Natural killer cell (primary cell): ENCODE measurements at regions of chr19 and their contacts with region 1.

Region 1: GRCh38 chr19:21082011-21082975 is at the start of gene ZNF714:
- DNase-seq: peak; percentile 83 to 87
- ATAC-seq: peak; percentile 96 to 100 (median 99)
- H3K4me3 ChIP-seq: peak within 1 kb of the TSS; percentile 87
- H3K4me3 Mint-ChIP-seq: peak within 1 kb of the TSS; percentile 99
- H3K27ac ChIP-seq: peak within 1 kb of the TSS; percentile 78
- H3K27ac Mint-ChIP-seq: peak within 1 kb of the TSS; percentile 91 to 99
- H3K4me1 ChIP-seq: peaks cover 2% of the 10 kb centered on the region
- H3K4me1 Mint-ChIP-seq: peaks cover 10 to 14% of the 10 kb centered on the region in 2 donors
- H3K27me3 ChIP-seq: no peaks in the 10 kb centered on the region
- H3K27me3 Mint-ChIP-seq: no peaks in the 10 kb centered on the region
- CTCF ChIP-seq: no peak
- total RNA-seq, gene ZNF714: 12.5 to 15.0 (median 14.7) TPM

Region 2: DNA sequence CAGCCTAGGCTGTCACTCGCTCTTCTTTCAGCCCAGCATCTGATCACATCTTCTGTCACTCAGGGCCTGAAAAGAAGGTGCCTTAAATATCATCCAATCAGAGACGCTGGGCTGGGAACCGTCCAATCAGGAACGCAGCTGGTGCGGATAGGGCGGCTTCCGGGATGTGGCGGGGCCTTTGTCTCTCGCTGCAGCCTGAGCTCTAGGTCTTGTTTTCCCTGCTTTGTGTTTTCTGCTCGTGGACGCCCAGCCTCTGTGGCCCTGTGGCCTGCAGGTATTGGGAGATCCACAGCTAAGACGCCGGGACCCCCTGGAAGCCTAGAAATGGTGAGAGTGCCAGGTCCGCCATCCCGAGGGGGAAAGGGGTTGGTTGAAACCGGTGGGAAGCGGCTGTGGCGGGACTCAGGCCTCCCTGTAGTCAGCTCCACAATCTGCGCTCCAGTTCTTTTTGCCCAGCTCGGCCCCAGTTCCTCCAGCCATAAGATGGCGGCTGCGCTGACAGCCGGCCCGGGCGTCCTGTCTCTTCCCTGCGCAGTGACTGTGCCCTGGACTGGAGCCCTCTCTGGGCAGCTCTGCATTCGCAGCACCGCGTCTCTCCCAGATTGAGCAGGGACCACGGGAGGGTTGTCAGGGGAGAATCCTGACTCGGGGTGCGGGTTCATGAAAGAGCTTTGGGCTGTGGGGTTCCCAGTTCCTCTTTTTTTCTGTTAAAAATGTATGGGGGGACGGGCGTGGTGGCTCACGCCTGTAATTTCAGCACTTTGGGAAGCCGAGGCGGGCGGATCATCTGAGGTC is 159.0 kb before region 1 on chr19 and contains the start of gene ZNF85:
- intact Hi-C with region 1: loop called (anchors 1 kb)
- DNase-seq: peak; percentile 89 to 94
- ATAC-seq: peak; percentile 96 to 99 (median 99)
- H3K4me3 ChIP-seq: peak within 1 kb of the TSS; percentile 73
- H3K4me3 Mint-ChIP-seq: peak within 1 kb of the TSS; percentile 97
- H3K27ac ChIP-seq: peak within 1 kb of the TSS; percentile 91
- H3K27ac Mint-ChIP-seq: peak within 1 kb of the TSS; percentile 91 to 98
- H3K4me1 ChIP-seq: peaks cover 11% of the 10 kb centered on the region
- H3K4me1 Mint-ChIP-seq: peaks cover 19% of the 10 kb centered on the region in 2 donors
- H3K27me3 ChIP-seq: no peaks in the 10 kb centered on the region
- H3K27me3 Mint-ChIP-seq: no peaks in the 10 kb centered on the region
- CTCF ChIP-seq: no peak
- total RNA-seq, gene ZNF85: 3.9 to 8.6 (median 5.4) TPM

Region 3: GRCh38 chr19:21020298-21021227 is 61.7 kb before region 1 on chr19 and contains the start of gene ZNF430:
- intact Hi-C with region 1: loop called (anchors 2 kb)
- DNase-seq: peak; percentile 92 to 96
- ATAC-seq: peak; percentile 94 to 99 (median 97)
- H3K4me3 ChIP-seq: peak within 1 kb of the TSS; percentile 98
- H3K4me3 Mint-ChIP-seq: peak within 1 kb of the TSS; percentile 100
- H3K27ac ChIP-seq: peak within 1 kb of the TSS; percentile 97
- H3K27ac Mint-ChIP-seq: peak within 1 kb of the TSS; percentile 99 to 100
- H3K4me1 ChIP-seq: peaks cover 19% of the 10 kb centered on the region
- H3K4me1 Mint-ChIP-seq: peaks cover 37 to 39% of the 10 kb centered on the region in 2 donors
- H3K27me3 ChIP-seq: no peaks in the 10 kb centered on the region
- H3K27me3 Mint-ChIP-seq: no peaks in the 10 kb centered on the region
- CTCF ChIP-seq: no peak
- total RNA-seq, gene ZNF430: 32.7 to 43.0 (median 33.3) TPM

Region 4: DNA sequence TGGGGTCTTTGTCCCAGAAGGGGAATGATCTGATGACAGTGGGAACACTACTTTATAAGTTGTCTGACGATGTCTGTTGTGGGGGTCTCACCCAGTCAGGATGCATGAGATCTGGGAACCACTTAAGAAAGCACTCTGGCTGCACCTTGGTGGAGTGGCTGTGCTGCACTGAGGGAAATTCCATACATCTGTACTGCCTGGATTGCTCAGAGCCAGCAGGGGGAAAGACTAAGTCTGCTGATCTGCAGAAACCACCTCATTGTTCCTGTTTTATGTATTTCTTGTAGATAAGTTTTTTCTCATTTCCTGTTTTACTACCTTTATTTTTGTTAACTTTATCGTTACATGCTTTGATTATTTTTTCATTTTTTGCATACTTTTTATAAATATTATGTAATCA is 34.6 kb before region 1 on chr19:
- intact Hi-C with region 1: no loop called
- DNase-seq: no peak
- ATAC-seq: no peak
- H3K4me3 ChIP-seq: no peak overlapping the region
- H3K4me3 Mint-ChIP-seq: no peak overlapping the region
- H3K27ac ChIP-seq: no peak overlapping the region
- H3K27ac Mint-ChIP-seq: peak overlapping the region; percentile 0 to 3
- H3K4me1 ChIP-seq: no peaks in the 10 kb centered on the region
- H3K4me1 Mint-ChIP-seq: peaks cover 37 to 46% of the 10 kb centered on the region in 2 donors
- H3K27me3 ChIP-seq: no peaks in the 10 kb centered on the region
- H3K27me3 Mint-ChIP-seq: no peaks in the 10 kb centered on the region
- CTCF ChIP-seq: no peak

Region 5: DNA sequence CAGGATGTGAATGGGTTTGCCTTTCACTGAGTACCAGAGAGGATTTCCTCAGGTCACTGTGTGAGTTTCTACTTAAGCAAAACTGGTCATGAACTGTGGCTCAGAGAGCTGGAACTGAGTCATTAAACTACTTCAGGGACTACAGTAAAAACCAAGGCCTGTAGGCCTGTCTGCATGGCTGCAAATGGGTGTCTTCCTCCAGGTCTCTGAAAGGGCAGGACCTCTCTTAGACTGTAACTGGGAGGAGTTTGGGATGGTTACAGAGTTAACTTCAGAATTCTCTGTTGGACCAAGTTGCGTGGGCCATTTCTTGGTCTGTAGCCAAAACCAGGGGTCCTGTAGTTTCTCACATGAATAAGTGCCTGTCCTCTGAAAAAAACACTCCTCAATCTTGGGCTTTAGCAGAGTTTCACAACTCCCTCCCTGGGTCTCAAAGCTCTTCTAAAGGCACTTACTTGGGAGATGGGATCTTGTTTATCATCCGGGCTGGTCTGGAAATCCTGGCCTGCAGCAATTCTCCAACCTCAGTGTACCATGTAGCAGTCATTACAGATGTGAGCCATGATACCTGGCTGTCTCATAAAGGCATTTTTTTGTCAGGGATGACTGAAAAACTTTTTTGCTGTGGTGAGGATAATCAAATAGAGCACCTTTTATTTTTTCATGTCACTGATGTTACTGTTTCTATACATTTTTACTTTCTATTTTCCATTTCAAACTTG is 19.4 kb after region 1 on chr19:
- intact Hi-C with region 1: no loop called
- DNase-seq: no peak
- ATAC-seq: no peak
- H3K4me3 ChIP-seq: no peak overlapping the region
- H3K4me3 Mint-ChIP-seq: no peak overlapping the region
- H3K27ac ChIP-seq: no peak overlapping the region
- H3K27ac Mint-ChIP-seq: no peak overlapping the region
- H3K4me1 ChIP-seq: no peaks in the 10 kb centered on the region
- H3K4me1 Mint-ChIP-seq: no peaks in the 10 kb centered on the region
- H3K27me3 ChIP-seq: no peaks in the 10 kb centered on the region
- H3K27me3 Mint-ChIP-seq: no peaks in the 10 kb centered on the region
- CTCF ChIP-seq: no peak

Region 6: GRCh38 chr19:21141787-21142464 is 59.6 kb after region 1 on chr19 and contains the start of gene ZNF431:
- intact Hi-C with region 1: loop called (anchors 1 kb)
- DNase-seq: peak; percentile 87 to 95
- ATAC-seq: peak; percentile 97 to 99 (median 99)
- H3K4me3 ChIP-seq: peak within 1 kb of the TSS; percentile 62
- H3K4me3 Mint-ChIP-seq: peak within 1 kb of the TSS; percentile 95
- H3K27ac ChIP-seq: peak within 1 kb of the TSS; percentile 79
- H3K27ac Mint-ChIP-seq: peak within 1 kb of the TSS; percentile 95 to 98
- H3K4me1 ChIP-seq: peaks cover 9% of the 10 kb centered on the region
- H3K4me1 Mint-ChIP-seq: peaks cover 33 to 44% of the 10 kb centered on the region in 2 donors
- H3K27me3 ChIP-seq: no peaks in the 10 kb centered on the region
- H3K27me3 Mint-ChIP-seq: no peaks in the 10 kb centered on the region
- CTCF ChIP-seq: no peak
- total RNA-seq, gene ZNF431: 30.1 to 39.7 (median 30.4) TPM

Region 7: GRCh38 chr19:21851596-21852345 is 769.5 kb after region 1 on chr19:
- intact Hi-C with region 1: loop called (anchors 10 kb)
- DNase-seq: peak; percentile 87 to 93
- ATAC-seq: peak; percentile 97 to 99 (median 99)
- H3K4me3 ChIP-seq: peak overlapping the region; percentile 98
- H3K4me3 Mint-ChIP-seq: peak overlapping the region; percentile 94
- H3K27ac ChIP-seq: peak overlapping the region; percentile 79
- H3K27ac Mint-ChIP-seq: peak overlapping the region; percentile 74 to 87
- H3K4me1 ChIP-seq: peaks cover 15% of the 10 kb centered on the region
- H3K4me1 Mint-ChIP-seq: peaks cover 13% of the 10 kb centered on the region in 2 donors
- H3K27me3 ChIP-seq: no peaks in the 10 kb centered on the region
- H3K27me3 Mint-ChIP-seq: peaks cover 0 to 5% of the 10 kb centered on the region in 2 donors
- CTCF ChIP-seq: no peak